Transverse colon (tissue), 4 donors: ENCODE measurements at regions of chr7 and their contacts with region 1.

Region 1: GRCh38 chr7:25557379-25557917 is 329.2 kb upstream of the NPVF start:
- DNase-seq: no peak
- H3K4me3 ChIP-seq: no peak overlapping the region
- H3K27ac ChIP-seq: no peak overlapping the region
- H3K4me1 ChIP-seq: peaks cover 0 to 2% (median 0%) of the 10 kb centered on the region in 4 donors
- H3K27me3 ChIP-seq: no peaks in the 10 kb centered on the region
- CTCF ChIP-seq: no peak
- EP300 ChIP-seq: no peak
- POLR2A ChIP-seq: no peak

Region 2: DNA sequence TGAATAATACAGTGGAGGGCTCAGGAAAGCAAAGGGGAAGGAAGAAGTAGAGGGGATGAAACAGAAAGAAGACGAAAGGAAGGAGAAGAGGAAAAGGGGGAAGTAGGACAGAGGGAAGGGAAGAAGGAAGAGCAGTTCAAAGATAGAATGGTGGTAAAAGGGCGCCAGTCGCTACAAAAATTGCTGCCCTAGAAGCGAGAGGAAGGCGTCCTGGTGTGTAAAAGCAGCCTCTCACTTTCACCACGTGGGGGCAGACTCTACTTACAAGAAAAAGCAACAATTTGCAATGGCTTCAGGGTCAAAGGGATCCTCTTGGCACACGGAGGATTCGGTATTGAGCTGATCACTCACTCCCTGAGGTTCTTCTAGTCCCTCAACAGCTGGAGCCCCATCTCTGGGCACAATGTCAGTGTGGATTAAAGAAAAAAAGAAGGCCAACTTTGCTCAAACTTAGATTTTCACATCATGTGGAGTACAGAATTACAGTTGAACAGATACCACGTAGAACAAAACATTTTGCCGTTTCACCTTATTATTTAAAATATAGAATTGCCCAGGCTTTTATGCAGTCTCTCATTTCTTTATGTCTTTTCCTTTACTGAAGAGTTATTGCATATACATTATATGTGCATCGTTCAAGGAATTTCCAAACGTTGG is 297.7 kb before region 1 on chr7:
- in situ Hi-C with region 1: loop called (anchors 5 to 10 kb)
- intact Hi-C with region 1: loop called (anchors 5 kb)
- DNase-seq: peak; percentile 76
- H3K4me3 ChIP-seq: no peak overlapping the region
- H3K27ac ChIP-seq: peak overlapping the region in 2 of 4 donors; percentile 76 to 77
- H3K4me1 ChIP-seq: peaks cover 14 to 37% (median 29%) of the 10 kb centered on the region in 4 donors
- H3K27me3 ChIP-seq: no peaks in the 10 kb centered on the region
- CTCF ChIP-seq: peak; percentile 82 to 88 (median 83)
- EP300 ChIP-seq: no peak
- POLR2A ChIP-seq: no peak

Region 3: DNA sequence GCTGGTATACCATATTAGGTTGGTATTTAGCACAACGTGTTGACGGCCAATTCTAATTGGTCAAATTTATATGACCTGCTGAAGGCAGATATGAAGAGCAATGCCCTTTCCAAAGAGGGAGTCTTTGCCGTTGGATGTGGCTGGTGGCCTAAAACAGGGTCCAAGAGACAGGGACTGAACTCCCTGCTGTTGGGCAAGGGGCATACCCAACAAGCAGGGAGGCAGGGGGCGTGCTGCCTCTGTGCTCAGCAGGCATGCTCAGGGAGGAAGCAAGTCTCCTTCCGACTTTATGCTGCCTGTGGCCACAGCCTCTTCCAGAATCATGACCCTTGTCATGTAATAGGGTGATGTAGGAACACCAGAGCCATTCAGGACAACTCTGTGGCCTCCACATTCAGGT is 161.5 kb before region 1 on chr7:
- in situ Hi-C with region 1: loop called in 3 of 4 experiments (anchors 5 to 10 kb)
- intact Hi-C with region 1: loop called (anchors 5 kb)
- DNase-seq: no peak
- H3K4me3 ChIP-seq: no peak overlapping the region
- H3K27ac ChIP-seq: no peak overlapping the region
- H3K4me1 ChIP-seq: peaks cover 0 to 14% (median 2%) of the 10 kb centered on the region in 4 donors
- H3K27me3 ChIP-seq: no peaks in the 10 kb centered on the region
- CTCF ChIP-seq: no peak
- EP300 ChIP-seq: no peak
- POLR2A ChIP-seq: no peak